ENCODE measurements at regions of chr19 and their contacts with region 1.

Region 1: GRCh38 chr19:4139614-4140236 is 13.7 kb upstream of the CREB3L3 start:
- DNase-seq: peak; percentile 94
- ATAC-seq: peak; percentile 81
- H3K4me3 Mint-ChIP-seq: peak overlapping the region; percentile 31; the same call in 1 of the 2 replicates
- H3K27ac Mint-ChIP-seq: peak overlapping the region; percentile 70; the same call in 1 of the 2 replicates
- H3K4me1 Mint-ChIP-seq: peaks cover 6% of the 10 kb centered on the region
- H3K27me3 Mint-ChIP-seq: peaks cover 18% of the 10 kb centered on the region
- CTCF ChIP-seq: peak; percentile 94

Region 2: GRCh38 chr19:4007021-4007835 is 132.5 kb before region 1 on chr19 and contains the start of gene PIAS4:
- CTCF ChIA-PET with region 1: interaction called, 16 read pairs
- POLR2A ChIA-PET with region 1: no interaction called
- DNase-seq: peak; percentile 95
- ATAC-seq: peak; percentile 94
- H3K4me3 Mint-ChIP-seq: peak within 1 kb of the TSS; percentile 88
- H3K27ac Mint-ChIP-seq: peak within 1 kb of the TSS; percentile 87; the same call in 1 of the 2 replicates
- H3K4me1 Mint-ChIP-seq: peaks cover 14% of the 10 kb centered on the region
- H3K27me3 Mint-ChIP-seq: no peaks in the 10 kb centered on the region
- CTCF ChIP-seq: no peak
- total RNA-seq, gene PIAS4: 45.5 to 46.0 TPM (median 45.9 TPM) in 3 replicates

Region 3: DNA sequence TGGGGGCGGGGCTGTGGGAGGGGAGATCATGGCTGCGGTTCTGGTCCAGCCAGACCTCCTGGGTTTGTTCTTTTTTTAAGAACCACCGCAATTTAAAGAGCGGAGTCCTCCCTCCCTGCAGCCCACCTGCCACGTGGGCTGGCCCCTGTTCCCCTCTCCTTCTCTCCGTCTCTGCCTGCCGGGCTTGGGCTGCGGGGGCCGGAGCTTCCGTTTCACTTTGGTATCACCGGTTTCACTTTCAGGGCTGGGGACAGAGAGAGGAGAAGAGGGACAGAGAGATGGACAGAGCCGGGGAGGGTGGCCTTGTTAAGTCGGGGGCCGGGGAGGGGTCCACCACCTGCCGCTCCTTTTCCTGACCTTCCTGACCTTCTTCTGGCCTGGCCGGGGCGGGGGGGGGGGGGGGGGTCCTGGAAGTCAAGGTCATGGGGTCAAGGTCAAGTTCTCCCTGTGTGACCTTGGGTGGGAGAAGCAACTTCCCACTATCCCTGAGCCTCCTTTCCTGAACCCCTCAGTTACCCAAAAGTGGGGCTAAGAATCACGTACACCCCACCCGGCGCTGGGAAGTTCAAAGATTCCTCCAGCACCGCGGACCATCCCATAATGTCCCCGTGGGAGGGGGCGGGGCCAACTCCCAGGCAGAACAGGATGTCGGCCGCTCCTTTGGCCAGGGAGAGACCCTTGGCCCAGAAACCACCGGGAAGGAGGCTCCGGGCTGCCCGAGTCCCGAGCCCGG is 61.7 kb before region 1 on chr19:
- CTCF ChIA-PET with region 1: interaction called, 15 read pairs
- POLR2A ChIA-PET with region 1: no interaction called
- DNase-seq: peak; percentile 62
- ATAC-seq: peak; percentile 63
- H3K4me3 Mint-ChIP-seq: peak overlapping the region; percentile 42
- H3K27ac Mint-ChIP-seq: 0 out of 2 replicates have a peak overlapping the region, but pooled peaks have one; percentile 65
- H3K4me1 Mint-ChIP-seq: peaks cover 23% of the 10 kb centered on the region
- H3K27me3 Mint-ChIP-seq: peaks cover 3% of the 10 kb centered on the region; the same call in 1 of the 2 replicates
- CTCF ChIP-seq: no peak

Region 4: GRCh38 chr19:4123615-4124568 is 15.8 kb before region 1 on chr19 and contains the start of gene MAP2K2:
- CTCF ChIA-PET with region 1: interaction called, 46 read pairs
- POLR2A ChIA-PET with region 1: no interaction called
- DNase-seq: peak; percentile 96
- ATAC-seq: peak; percentile 88
- H3K4me3 Mint-ChIP-seq: peak within 1 kb of the TSS; percentile 94
- H3K27ac Mint-ChIP-seq: peak within 1 kb of the TSS; percentile 64
- H3K4me1 Mint-ChIP-seq: peaks cover 11% of the 10 kb centered on the region
- H3K27me3 Mint-ChIP-seq: 0 out of 2 replicates have a peak, but pooled peaks cover 2% of the 10 kb centered on the region
- CTCF ChIP-seq: no peak
- total RNA-seq, gene MAP2K2: 175 to 177 TPM (median 176 TPM) in 3 replicates

Region 5: GRCh38 chr19:4186087-4186993 is 46.6 kb after region 1 on chr19:
- CTCF ChIA-PET with region 1: interaction called, 14 read pairs
- POLR2A ChIA-PET with region 1: no interaction called
- DNase-seq: peak; percentile 96
- ATAC-seq: peak; percentile 93
- H3K4me3 Mint-ChIP-seq: no peak overlapping the region
- H3K27ac Mint-ChIP-seq: 0 out of 2 replicates have a peak overlapping the region, but pooled peaks have one; percentile 16
- H3K4me1 Mint-ChIP-seq: peaks cover 13% of the 10 kb centered on the region
- H3K27me3 Mint-ChIP-seq: peaks cover 9% of the 10 kb centered on the region
- CTCF ChIP-seq: peak; percentile 88

Region 6: GRCh38 chr19:4232958-4233853 is 93.5 kb after region 1 on chr19:
- CTCF ChIA-PET with region 1: interaction called, 12 read pairs
- POLR2A ChIA-PET with region 1: no interaction called
- DNase-seq: peak; percentile 84
- ATAC-seq: peak; percentile 77
- H3K4me3 Mint-ChIP-seq: no peak overlapping the region
- H3K27ac Mint-ChIP-seq: no peak overlapping the region
- H3K4me1 Mint-ChIP-seq: no peaks in the 10 kb centered on the region
- H3K27me3 Mint-ChIP-seq: no peaks in the 10 kb centered on the region; the same call in 1 of the 2 replicates
- CTCF ChIP-seq: peak; percentile 82